Uterus (tissue), 4 donors: ENCODE measurements at regions of chr17 and their contacts with region 1.

Region 1: GRCh38 chr17:10327640-10328039 is 45.2 kb downstream of the MYH13 start:
- DNase-seq: peak; percentile 74 to 80
- H3K4me3 ChIP-seq: no peak overlapping the region
- H3K27ac ChIP-seq: no peak overlapping the region
- H3K4me1 ChIP-seq: no peaks in the 10 kb centered on the region
- H3K27me3 ChIP-seq: no peaks in the 10 kb centered on the region
- CTCF ChIP-seq: peak; percentile 70 to 86 (median 75)
- POLR2A ChIP-seq: no peak

Region 2: GRCh38 chr17:10144982-10145381 is 182.7 kb before region 1 on chr17:
- intact Hi-C with region 1: no loop called
- DNase-seq: no peak
- H3K4me3 ChIP-seq: no peak overlapping the region
- H3K27ac ChIP-seq: no peak overlapping the region
- H3K4me1 ChIP-seq: peaks cover 0 to 5% of the 10 kb centered on the region in 2 donors
- H3K27me3 ChIP-seq: no peaks in the 10 kb centered on the region
- CTCF ChIP-seq: no peak
- POLR2A ChIP-seq: no peak

Region 3: GRCh38 chr17:10271106-10271562 is 56.5 kb before region 1 on chr17:
- intact Hi-C with region 1: loop called (anchors 2 kb)
- DNase-seq: no peak
- H3K4me3 ChIP-seq: no peak overlapping the region
- H3K27ac ChIP-seq: no peak overlapping the region
- H3K4me1 ChIP-seq: no peaks in the 10 kb centered on the region
- H3K27me3 ChIP-seq: no peaks in the 10 kb centered on the region
- CTCF ChIP-seq: no peak
- POLR2A ChIP-seq: no peak

Region 4: DNA sequence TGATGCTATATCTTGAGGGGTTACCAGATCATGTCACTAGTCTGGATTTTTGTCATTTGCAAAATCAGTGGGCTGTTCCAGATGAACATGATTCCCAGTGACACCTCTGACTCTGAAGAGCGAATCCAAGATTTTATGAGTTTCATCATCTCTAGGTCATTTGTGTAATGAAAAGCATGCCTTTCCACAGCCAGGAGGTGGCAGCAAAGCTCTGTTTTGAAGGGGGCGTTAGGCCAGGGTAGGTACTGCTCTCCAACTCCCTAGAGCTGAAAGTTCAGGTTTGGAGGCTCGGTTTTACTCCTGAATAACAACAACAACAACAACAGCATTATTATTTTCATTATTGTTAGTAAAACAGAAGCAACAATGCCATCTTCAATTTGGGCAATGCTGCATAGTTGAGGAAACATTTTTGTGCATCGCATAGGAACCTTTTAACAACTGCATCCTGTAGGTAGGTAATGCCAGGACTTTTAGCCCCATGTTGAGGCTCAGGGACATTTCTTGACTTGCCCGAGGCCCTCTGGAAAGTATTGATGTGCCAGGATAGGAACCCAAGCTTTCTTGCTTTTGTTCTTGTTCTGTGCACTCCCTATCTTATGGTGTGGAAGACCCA is 31.8 kb before region 1 on chr17:
- intact Hi-C with region 1: no loop called
- DNase-seq: peak; percentile 43 to 68
- H3K4me3 ChIP-seq: no peak overlapping the region
- H3K27ac ChIP-seq: no peak overlapping the region
- H3K4me1 ChIP-seq: no peaks in the 10 kb centered on the region
- H3K27me3 ChIP-seq: no peaks in the 10 kb centered on the region
- CTCF ChIP-seq: peak; percentile 56 to 69 (median 60)
- POLR2A ChIP-seq: no peak